AG04450 (cell line): ENCODE measurements at regions of chr5 and their contacts with region 1.

Region 1: DNA sequence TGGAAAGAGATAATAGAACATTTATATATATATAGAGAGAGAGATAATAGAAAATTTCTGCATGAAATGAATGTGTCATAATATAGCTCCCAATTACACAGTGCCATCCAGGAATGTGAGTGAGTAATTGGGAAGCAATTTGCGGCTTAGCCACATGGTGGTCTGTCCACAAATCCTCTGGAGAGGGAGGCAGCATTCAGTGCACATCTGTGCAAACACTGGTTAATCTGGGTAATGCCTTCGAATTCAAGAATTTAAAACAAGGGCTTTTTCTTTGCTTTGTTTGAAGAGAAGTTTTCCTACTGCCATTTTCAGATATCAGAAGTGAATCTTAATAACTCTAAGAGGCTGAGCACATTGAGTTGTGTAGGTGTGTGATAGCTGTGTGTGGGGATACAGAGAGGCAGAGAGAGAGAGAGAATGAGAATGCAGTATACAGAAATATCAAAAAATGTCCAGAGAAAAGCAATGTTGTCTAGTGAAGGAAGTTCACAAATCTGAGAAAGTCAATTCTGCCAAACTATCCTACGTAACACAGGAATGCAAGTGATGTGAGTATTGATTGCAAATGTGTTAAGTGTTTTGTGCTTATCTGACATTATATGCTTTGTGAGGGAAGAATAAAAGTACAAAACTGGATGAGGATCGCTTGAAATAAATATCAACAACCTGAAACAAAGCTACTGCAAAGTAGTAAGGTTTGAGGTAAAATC is 134.6 kb downstream of the EDIL3 start:
- DNase-seq: peak; percentile 48
- H3K4me3 ChIP-seq: no peak overlapping the region
- H3K27ac ChIP-seq: no peak overlapping the region
- H3K27me3 ChIP-seq: no peaks in the 10 kb centered on the region
- CTCF ChIP-seq: no peak

Region 2: GRCh38 chr5:84231433-84231832 is 18.6 kb before region 1 on chr5:
- CTCF ChIA-PET with region 1: no interaction called
- POLR2A ChIA-PET with region 1: no interaction called
- DNase-seq: no peak
- H3K4me3 ChIP-seq: no peak overlapping the region
- H3K27ac ChIP-seq: no peak overlapping the region
- H3K27me3 ChIP-seq: no peaks in the 10 kb centered on the region
- CTCF ChIP-seq: no peak

Region 3: GRCh38 chr5:84287951-84288350 is 37.9 kb after region 1 on chr5:
- CTCF ChIA-PET with region 1: no interaction called
- POLR2A ChIA-PET with region 1: no interaction called
- DNase-seq: peak; percentile 44
- H3K4me3 ChIP-seq: no peak overlapping the region
- H3K27ac ChIP-seq: no peak overlapping the region
- H3K27me3 ChIP-seq: no peaks in the 10 kb centered on the region
- CTCF ChIP-seq: no peak

Region 4: DNA sequence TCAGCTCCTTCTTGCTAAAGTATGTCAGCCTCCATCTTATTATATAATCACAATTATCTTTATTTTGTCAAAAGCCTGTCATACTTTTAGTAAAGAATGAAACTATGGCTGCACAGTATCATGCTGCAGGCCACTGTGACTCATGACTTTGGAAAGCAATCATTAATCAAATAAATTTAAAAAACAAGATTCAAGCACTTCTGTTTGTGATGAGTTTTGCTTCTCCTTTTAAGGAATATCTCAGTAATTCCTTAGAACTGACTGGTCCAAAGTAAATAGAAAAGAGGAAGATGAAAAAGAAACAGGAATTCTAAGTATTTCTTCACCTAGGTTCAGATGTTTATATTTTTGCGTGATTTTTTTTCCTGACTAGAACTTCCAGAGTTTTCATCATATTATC is 51.5 kb after region 1 on chr5:
- CTCF ChIA-PET with region 1: no interaction called
- POLR2A ChIA-PET with region 1: interaction called, 10 read pairs
- DNase-seq: no peak
- H3K4me3 ChIP-seq: no peak overlapping the region
- H3K27ac ChIP-seq: no peak overlapping the region
- H3K27me3 ChIP-seq: no peaks in the 10 kb centered on the region
- CTCF ChIP-seq: no peak